Activated B cell treated with CpG ODN at 0.5 μM for 24 hours (primary cell): ENCODE measurements at regions of chr17 and their contacts with region 1.

Region 1: DNA sequence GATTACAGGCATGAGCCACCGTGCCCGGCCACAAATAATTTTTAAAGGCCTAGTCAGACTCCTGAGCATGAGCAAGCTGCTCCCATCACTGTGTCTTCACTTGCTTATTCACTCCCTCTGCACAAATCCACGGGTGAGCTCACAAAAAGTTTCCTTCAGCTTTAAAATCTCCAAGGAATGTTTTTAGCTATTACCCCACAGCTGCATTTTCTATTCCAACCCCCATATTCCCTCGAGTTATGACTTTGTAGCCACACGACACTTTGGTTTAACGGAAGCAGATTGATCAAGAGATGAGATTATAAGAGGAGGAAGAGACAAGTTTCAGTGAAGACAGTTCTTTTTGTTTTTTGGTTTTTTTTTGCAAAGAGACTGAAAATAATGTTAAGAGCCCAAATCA is 49.1 kb upstream of the SLC25A19 start:
- DNase-seq: no peak
- ATAC-seq: peak; percentile 19
- H3K4me3 Mint-ChIP-seq: peak overlapping the region; percentile 62
- H3K27ac Mint-ChIP-seq: peak overlapping the region; percentile 84
- H3K4me1 Mint-ChIP-seq: peaks cover 89% of the 10 kb centered on the region
- H3K27me3 Mint-ChIP-seq: no peaks in the 10 kb centered on the region
- CTCF ChIP-seq: no peak

Region 2: DNA sequence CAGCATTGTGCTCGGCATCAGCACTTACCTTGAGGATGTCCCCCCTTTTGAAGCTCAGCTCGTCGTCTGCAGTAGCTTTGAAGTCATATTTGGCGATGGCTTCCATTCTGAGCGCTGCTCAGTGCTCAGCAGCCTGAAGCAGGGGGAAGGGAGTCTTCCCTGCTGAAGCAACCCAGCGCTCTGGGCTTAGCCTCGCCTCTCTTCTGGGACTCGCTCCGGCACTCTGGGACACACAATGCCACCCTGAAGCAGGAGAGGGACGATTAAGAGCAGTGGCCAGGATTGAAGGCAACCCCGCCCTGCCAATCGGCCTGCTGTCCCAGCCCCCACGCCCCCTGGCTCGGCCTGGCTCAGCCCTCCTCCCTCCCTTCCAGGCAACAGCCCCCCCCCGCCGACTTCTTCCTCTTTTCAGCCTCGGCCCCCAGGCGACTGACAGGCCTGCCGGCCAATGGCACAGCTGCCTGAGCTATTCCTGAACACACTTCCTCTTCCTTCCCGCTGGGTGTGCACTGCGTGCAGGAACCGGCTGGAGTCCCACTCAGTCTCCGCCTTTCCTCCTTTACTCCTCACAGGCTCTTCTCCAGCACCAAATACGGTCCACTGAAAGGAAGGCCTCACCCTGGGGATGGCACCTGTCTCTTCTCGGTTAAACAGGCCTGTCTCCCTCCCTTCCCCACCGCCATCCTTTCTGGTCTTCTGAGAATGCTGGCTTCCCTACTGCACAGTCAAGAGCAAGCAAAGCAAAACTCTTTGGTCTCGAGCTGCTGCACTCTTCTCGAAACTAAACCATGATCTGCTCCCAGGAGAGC is 55.4 kb after region 1 on chr17:
- CTCF ChIA-PET with region 1: interaction called, 3 read pairs
- POLR2A ChIA-PET with region 1: interaction called, 14 read pairs
- intact Hi-C with region 1: no loop called
- DNase-seq: peak; percentile 84
- ATAC-seq: peak; percentile 96
- H3K4me3 Mint-ChIP-seq: peak overlapping the region; percentile 92
- H3K27ac Mint-ChIP-seq: peak overlapping the region; percentile 88
- H3K4me1 Mint-ChIP-seq: peaks cover 84% of the 10 kb centered on the region
- H3K27me3 Mint-ChIP-seq: no peaks in the 10 kb centered on the region
- CTCF ChIP-seq: no peak

Region 3: DNA sequence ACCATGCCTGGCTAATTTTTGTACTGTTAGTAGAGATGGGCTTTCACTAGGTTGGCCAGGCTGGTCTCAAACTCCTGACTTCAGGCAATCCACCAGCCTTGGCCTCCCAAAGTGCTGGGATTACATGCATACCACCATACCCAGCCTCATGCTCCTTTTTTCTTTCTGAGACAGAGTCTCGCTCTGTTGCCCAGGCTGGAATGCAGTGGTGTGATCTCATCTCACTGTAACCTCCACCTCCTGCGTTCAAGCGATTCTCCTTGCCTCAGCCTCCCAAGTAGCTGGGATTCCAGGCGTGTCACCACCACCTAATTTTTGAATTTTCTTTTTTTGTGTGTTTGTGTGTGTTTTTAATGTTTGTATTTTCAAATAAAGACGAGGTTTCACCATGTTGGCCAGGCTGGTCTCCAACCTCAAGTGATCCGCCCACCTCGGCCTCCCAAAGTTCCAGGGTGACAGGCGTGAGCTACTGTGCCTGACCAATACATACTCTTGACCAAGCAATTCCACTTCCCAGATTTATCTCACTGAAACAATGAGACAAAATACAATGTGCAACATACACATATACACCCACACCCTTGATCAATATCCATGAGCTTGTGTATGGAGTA is 62.1 kb after region 1 on chr17:
- CTCF ChIA-PET with region 1: interaction called, 3 read pairs
- POLR2A ChIA-PET with region 1: interaction called, 42 read pairs
- intact Hi-C with region 1: no loop called
- DNase-seq: no peak
- ATAC-seq: no peak
- H3K4me3 Mint-ChIP-seq: peak overlapping the region; percentile 19
- H3K27ac Mint-ChIP-seq: peak overlapping the region; percentile 30
- H3K4me1 Mint-ChIP-seq: peaks cover 72% of the 10 kb centered on the region
- H3K27me3 Mint-ChIP-seq: no peaks in the 10 kb centered on the region
- CTCF ChIP-seq: no peak